CD4-positive, alpha-beta memory T cell (primary cell): ENCODE measurements at regions of chr1 and their contacts with region 1.

Region 1: DNA sequence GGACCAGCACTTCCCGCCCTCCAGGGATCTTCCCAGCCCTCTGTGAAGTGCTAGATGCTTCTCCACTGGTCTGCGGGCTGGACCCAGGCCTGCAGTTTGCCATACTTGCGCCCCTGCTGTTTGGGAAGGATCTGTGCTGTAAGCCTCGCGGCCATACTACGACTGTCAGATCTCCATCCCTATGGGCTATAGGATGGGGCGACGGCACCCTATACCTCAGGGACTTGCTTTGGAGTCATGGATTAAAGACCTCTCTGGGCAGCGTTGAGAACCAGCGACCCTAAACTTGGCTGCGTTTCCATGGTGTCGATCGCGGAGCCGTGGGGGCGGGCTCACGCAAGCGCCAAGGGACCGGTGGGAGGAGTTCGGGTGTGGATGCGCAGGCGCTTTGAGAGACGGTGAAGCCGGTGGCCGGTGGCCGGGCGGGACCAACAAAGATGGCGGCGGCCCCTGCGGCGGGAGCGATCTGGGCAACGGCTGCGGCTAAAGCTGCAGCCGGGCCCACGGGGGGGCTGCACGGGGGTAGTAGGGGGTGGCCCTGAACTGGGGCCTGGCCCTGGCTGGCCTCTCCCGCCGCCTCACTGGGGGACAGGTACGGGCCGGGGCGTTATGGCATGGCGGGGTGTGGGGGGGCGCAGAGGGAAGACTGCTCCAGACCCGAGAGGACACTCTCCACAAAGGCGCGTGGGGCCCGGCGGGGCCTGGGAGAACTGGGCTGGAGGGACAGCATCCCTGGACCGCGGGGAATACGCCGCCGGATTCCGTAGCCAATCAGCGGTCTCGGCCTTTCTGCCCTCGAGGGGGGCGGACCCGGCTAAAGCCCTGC is at the start of gene USP21:
- DNase-seq: peak; percentile 91 to 92 (median 92)
- H3K4me3 ChIP-seq: peak within 1 kb of the TSS; percentile 83 to 93
- H3K4me3 Mint-ChIP-seq: peak within 1 kb of the TSS; percentile 91 to 99 (median 94)
- H3K27ac ChIP-seq: peak within 1 kb of the TSS; percentile 84
- H3K27ac Mint-ChIP-seq: peak within 1 kb of the TSS; percentile 94 to 99 (median 97)
- H3K4me1 ChIP-seq: peaks cover 45% of the 10 kb centered on the region
- H3K4me1 Mint-ChIP-seq: peaks cover 40 to 77% (median 61%) of the 10 kb centered on the region in 4 donors
- H3K27me3 ChIP-seq: no peaks in the 10 kb centered on the region
- H3K27me3 Mint-ChIP-seq: no peaks in the 10 kb centered on the region
- total RNA-seq, gene USP21: 62.0 to 63.6 TPM

Region 2: DNA sequence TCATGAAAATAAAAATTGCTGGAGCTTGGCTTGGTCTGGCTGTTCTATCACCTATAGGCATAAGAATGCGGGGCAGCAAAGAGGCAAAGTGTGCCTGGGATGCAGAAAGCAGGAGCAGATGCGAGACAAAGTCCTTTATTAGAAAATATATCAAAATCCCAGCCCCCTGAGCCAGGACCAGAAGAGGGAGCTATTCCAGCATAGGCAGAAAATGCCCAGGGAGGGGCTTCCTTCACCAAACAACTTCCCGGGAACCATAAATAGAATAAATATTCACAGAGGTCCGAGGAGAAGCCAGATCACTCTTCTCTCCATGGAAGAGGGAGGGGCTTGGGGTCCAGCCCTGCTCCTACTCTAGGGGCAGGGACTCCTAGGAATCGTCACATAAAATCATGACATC is 11.9 kb after region 1 on chr1:
- CTCF ChIA-PET with region 1: interaction called, 48 read pairs
- POLR2A ChIA-PET with region 1: interaction called, 80 read pairs
- intact Hi-C with region 1: no loop called
- DNase-seq: no peak
- H3K4me3 ChIP-seq: no peak overlapping the region
- H3K4me3 Mint-ChIP-seq: no peak overlapping the region
- H3K27ac ChIP-seq: no peak overlapping the region
- H3K27ac Mint-ChIP-seq: peak overlapping the region in 3 of 7 donors; percentile 17 to 63 (median 59)
- H3K4me1 ChIP-seq: peaks cover 30% of the 10 kb centered on the region
- H3K4me1 Mint-ChIP-seq: peaks cover 27 to 77% (median 46%) of the 10 kb centered on the region in 4 donors
- H3K27me3 ChIP-seq: no peaks in the 10 kb centered on the region
- H3K27me3 Mint-ChIP-seq: no peaks in the 10 kb centered on the region

Region 3: GRCh38 chr1:161185282-161185682 is 26.0 kb after region 1 on chr1:
- CTCF ChIA-PET with region 1: interaction called, 115 read pairs
- POLR2A ChIA-PET with region 1: interaction called, 26 read pairs
- intact Hi-C with region 1: loop called (anchors 5 kb)
- DNase-seq: peak; percentile 86 to 92 (median 88)
- H3K4me3 ChIP-seq: peak overlapping the region; percentile 8 to 25
- H3K4me3 Mint-ChIP-seq: peak overlapping the region; percentile 73 to 89 (median 83)
- H3K27ac ChIP-seq: peak overlapping the region; percentile 47
- H3K27ac Mint-ChIP-seq: peak overlapping the region; percentile 86 to 96 (median 92)
- H3K4me1 ChIP-seq: peaks cover 94% of the 10 kb centered on the region
- H3K4me1 Mint-ChIP-seq: peaks cover 57 to 88% (median 78%) of the 10 kb centered on the region in 4 donors
- H3K27me3 ChIP-seq: no peaks in the 10 kb centered on the region
- H3K27me3 Mint-ChIP-seq: no peaks in the 10 kb centered on the region